ENCODE measurements at regions of chr14 and their contacts with region 1.

Region 1: DNA sequence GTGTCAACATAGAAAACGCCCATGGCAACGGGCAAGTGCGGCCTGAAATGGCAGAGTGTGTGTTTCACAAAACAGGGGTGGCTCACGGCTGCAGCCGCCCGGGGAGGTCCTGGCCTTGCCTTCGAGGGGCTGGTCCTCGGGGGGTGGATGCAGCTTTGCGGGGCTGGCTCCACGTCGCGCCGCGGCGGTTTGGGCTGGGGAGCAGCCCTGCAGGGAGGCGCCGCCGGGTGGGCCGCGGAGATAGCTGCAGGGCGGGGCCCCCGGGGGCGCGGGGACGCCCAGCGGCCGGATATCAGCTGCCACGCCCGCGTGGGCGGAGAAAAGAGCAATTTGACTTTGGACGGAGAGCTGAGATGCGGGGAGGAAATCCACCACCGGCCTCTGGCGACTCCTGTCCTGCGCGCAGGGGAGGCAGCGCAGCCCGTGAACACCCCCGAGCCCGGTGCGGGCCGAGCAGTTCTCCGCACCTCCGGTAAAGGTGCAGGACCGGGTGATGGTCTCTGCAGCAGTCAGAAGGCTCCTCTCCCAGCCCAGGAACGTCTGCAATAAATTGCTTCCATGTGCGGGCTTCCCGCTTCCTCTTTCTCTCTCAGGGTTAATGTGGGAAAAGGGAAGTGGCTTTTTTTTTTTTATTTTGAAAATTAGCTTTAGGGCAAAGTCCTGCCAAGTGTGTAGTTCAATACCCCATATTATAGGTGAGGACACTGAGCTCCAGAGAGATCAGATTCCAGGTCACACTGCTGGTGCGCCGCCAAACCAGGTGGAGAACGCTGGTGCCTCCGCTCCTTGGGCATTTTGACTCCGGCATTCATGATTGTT is 110.5 kb downstream of the ARF6 start:
- DNase-seq: peak; percentile 57 to 92 (median 77)
- ATAC-seq: peak; percentile 14
- H3K4me3 ChIP-seq: peak overlapping the region; percentile 44 to 56
- H3K4me3 Mint-ChIP-seq: peak overlapping the region; percentile 90
- H3K27ac ChIP-seq: peak overlapping the region; percentile 93 to 96
- H3K27ac Mint-ChIP-seq: peak overlapping the region; percentile 97
- H3K4me1 ChIP-seq: peaks cover 51% of the 10 kb centered on the region
- H3K4me1 Mint-ChIP-seq: peaks cover 56% of the 10 kb centered on the region
- H3K27me3 ChIP-seq: no peaks in the 10 kb centered on the region
- H3K27me3 Mint-ChIP-seq: no peaks in the 10 kb centered on the region
- CTCF ChIP-seq: peak; percentile 35

Region 2: DNA sequence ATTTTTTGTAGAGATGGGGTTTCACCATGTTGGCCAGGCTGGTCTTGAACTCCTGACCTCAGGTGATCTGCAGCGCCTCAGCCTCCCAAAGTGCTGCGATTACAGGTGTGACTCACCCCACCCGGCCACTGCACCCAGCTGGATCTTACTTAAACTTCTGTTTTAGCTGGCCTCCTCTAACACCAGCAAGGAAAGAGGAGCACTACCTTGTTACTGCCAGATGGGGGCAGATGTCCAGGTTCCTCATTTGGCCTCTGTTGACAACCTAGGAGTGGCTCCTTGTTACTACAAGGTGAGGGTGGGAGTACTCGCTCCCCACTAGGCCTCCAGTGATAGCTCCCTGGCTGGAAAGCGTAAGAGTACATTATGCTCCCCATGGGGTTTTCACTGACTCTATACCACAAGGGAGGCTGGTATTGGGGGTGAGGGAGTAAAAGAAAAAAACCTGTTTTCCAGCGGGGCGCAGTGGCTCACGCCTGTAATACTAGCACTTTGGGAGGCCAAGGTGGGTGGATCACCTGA is 123.7 kb before region 1 on chr14:
- CTCF ChIA-PET with region 1: interaction called, 22 read pairs
- POLR2A ChIA-PET with region 1: interaction called, 6 read pairs
- intact Hi-C with region 1: no loop called
- DNase-seq: peak in 6 of 9 experiments; percentile 38 to 83 (median 62)
- ATAC-seq: peak; percentile 97
- H3K4me3 ChIP-seq: no peak overlapping the region
- H3K4me3 Mint-ChIP-seq: no peak overlapping the region
- H3K27ac ChIP-seq: no peak overlapping the region
- H3K27ac Mint-ChIP-seq: no peak overlapping the region
- H3K4me1 ChIP-seq: peaks cover 11% of the 10 kb centered on the region
- H3K4me1 Mint-ChIP-seq: peaks cover 12% of the 10 kb centered on the region
- H3K27me3 ChIP-seq: no peaks in the 10 kb centered on the region
- H3K27me3 Mint-ChIP-seq: no peaks in the 10 kb centered on the region
- CTCF ChIP-seq: peak; percentile 47

Region 3: GRCh38 chr14:49959822-49960408 is 43.5 kb before region 1 on chr14:
- CTCF ChIA-PET with region 1: no interaction called
- POLR2A ChIA-PET with region 1: interaction called, 4 read pairs
- intact Hi-C with region 1: loop called in 1 of 2 experiments (anchors 5 kb)
- DNase-seq: peak in 2 of 9 experiments; percentile 27 to 37
- ATAC-seq: peak; percentile 62
- H3K4me3 ChIP-seq: no peak overlapping the region
- H3K4me3 Mint-ChIP-seq: peak overlapping the region; percentile 29
- H3K27ac ChIP-seq: no peak overlapping the region
- H3K27ac Mint-ChIP-seq: peak overlapping the region; percentile 11
- H3K4me1 ChIP-seq: no peaks in the 10 kb centered on the region
- H3K4me1 Mint-ChIP-seq: peaks cover 12% of the 10 kb centered on the region
- H3K27me3 ChIP-seq: no peaks in the 10 kb centered on the region
- H3K27me3 Mint-ChIP-seq: no peaks in the 10 kb centered on the region
- CTCF ChIP-seq: no peak

Region 4: GRCh38 chr14:50030036-50030435 is 26.6 kb after region 1 on chr14:
- CTCF ChIA-PET with region 1: no interaction called
- POLR2A ChIA-PET with region 1: no interaction called
- intact Hi-C with region 1: no loop called
- DNase-seq: no peak
- ATAC-seq: no peak
- H3K4me3 ChIP-seq: no peak overlapping the region
- H3K4me3 Mint-ChIP-seq: no peak overlapping the region
- H3K27ac ChIP-seq: no peak overlapping the region
- H3K27ac Mint-ChIP-seq: no peak overlapping the region
- H3K4me1 ChIP-seq: no peaks in the 10 kb centered on the region
- H3K4me1 Mint-ChIP-seq: peaks cover 8% of the 10 kb centered on the region
- H3K27me3 ChIP-seq: no peaks in the 10 kb centered on the region
- H3K27me3 Mint-ChIP-seq: no peaks in the 10 kb centered on the region
- CTCF ChIP-seq: no peak

Region 5: GRCh38 chr14:50045039-50045711 is 41.8 kb after region 1 on chr14:
- CTCF ChIA-PET with region 1: interaction called, 5 read pairs
- POLR2A ChIA-PET with region 1: interaction called, 9 read pairs
- intact Hi-C with region 1: loop called (anchors 1 to 5 kb)
- DNase-seq: peak; percentile 27 to 86 (median 72)
- ATAC-seq: peak; percentile 77
- H3K4me3 ChIP-seq: peak overlapping the region in 1 of 2 experiments; percentile 17
- H3K4me3 Mint-ChIP-seq: peak overlapping the region; percentile 56
- H3K27ac ChIP-seq: peak overlapping the region; percentile 63 to 89
- H3K27ac Mint-ChIP-seq: peak overlapping the region; percentile 91
- H3K4me1 ChIP-seq: peaks cover 62% of the 10 kb centered on the region
- H3K4me1 Mint-ChIP-seq: peaks cover 65% of the 10 kb centered on the region
- H3K27me3 ChIP-seq: no peaks in the 10 kb centered on the region
- H3K27me3 Mint-ChIP-seq: no peaks in the 10 kb centered on the region
- CTCF ChIP-seq: no peak

Region 6: DNA sequence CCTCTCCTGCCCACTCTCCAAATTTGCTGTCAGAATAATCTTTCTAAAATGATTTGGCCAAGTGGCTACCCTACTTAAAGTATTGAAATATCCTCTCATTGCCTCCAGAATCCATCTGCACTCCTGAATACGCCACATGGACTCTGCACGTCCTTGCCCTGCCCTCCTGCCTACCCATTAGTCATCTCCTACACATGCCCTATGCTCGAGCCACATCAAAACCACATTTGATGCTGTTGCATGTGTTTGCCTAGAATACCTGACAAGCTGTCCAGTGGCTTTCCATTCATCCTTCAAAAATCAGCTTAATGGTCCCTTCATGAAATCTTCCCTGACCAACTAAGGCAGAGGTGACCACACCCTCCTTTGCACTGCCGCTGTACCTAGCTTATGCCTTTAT is 95.9 kb after region 1 on chr14:
- CTCF ChIA-PET with region 1: interaction called, 12 read pairs
- POLR2A ChIA-PET with region 1: interaction called, 12 read pairs
- intact Hi-C with region 1: loop called (anchors 2 kb)
- DNase-seq: no peak
- ATAC-seq: no peak
- H3K4me3 ChIP-seq: no peak overlapping the region
- H3K4me3 Mint-ChIP-seq: no peak overlapping the region
- H3K27ac ChIP-seq: no peak overlapping the region
- H3K27ac Mint-ChIP-seq: peak overlapping the region; percentile 69
- H3K4me1 ChIP-seq: peaks cover 73% of the 10 kb centered on the region
- H3K4me1 Mint-ChIP-seq: peaks cover 71% of the 10 kb centered on the region
- H3K27me3 ChIP-seq: no peaks in the 10 kb centered on the region
- H3K27me3 Mint-ChIP-seq: no peaks in the 10 kb centered on the region
- CTCF ChIP-seq: no peak